ENCODE measurements at regions of chr10 and their contacts with region 1.

Region 1: GRCh38 chr10:79195091-79195923 is 126.5 kb downstream of the ZMIZ1 start:
- DNase-seq: peak; percentile 86
- H3K4me3 ChIP-seq: no peak overlapping the region
- H3K27ac ChIP-seq: peak overlapping the region; percentile 74
- H3K4me1 ChIP-seq: peaks cover 69% of the 10 kb centered on the region
- H3K27me3 ChIP-seq: no peaks in the 10 kb centered on the region
- CTCF ChIP-seq: peak; percentile 97

Region 2: DNA sequence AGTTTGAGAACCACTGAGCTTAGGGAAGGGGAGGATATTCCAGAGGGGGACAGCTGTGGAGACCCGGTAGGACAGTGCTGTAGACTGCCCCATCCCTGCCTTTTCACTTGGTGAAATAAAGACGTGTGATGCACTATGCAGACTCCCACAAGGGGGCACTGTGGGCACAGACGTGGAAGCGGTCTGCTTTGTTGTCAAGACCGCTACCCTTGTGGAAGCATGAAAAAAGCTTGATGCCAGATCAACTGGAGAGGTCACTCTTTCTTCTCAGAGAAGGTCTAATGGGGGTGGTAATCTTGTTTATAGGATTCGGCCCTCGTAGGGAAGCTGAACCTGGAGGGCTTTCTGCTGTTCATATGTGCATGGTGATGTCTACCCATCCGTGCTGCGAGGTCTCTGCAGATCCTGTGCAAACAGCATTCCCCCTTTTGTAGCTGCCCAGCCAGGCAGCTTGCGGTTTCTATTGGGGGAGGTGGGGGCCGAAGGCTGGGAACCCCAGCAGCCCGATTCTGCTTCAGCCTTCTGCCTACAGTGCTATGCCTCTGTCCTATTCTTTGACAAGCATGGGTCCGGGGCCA is 1147.9 kb before region 1 on chr10:
- intact Hi-C with region 1: loop called (anchors 10 kb)
- DNase-seq: peak; percentile 86
- H3K4me3 ChIP-seq: no peak overlapping the region
- H3K27ac ChIP-seq: no peak overlapping the region
- H3K4me1 ChIP-seq: peaks cover 21% of the 10 kb centered on the region
- H3K27me3 ChIP-seq: no peaks in the 10 kb centered on the region
- CTCF ChIP-seq: peak; percentile 90

Region 3: GRCh38 chr10:78852466-78853240 is 342.7 kb before region 1 on chr10:
- intact Hi-C with region 1: loop called (anchors 10 kb)
- DNase-seq: no peak
- H3K4me3 ChIP-seq: no peak overlapping the region
- H3K27ac ChIP-seq: no peak overlapping the region
- H3K4me1 ChIP-seq: peaks cover 16% of the 10 kb centered on the region
- H3K27me3 ChIP-seq: no peaks in the 10 kb centered on the region
- CTCF ChIP-seq: peak; percentile 49

Region 4: GRCh38 chr10:78865538-78865875 is 329.8 kb before region 1 on chr10:
- intact Hi-C with region 1: no loop called
- DNase-seq: no peak
- H3K4me3 ChIP-seq: no peak overlapping the region
- H3K27ac ChIP-seq: no peak overlapping the region
- H3K4me1 ChIP-seq: no peaks in the 10 kb centered on the region
- H3K27me3 ChIP-seq: no peaks in the 10 kb centered on the region
- CTCF ChIP-seq: no peak

Region 5: GRCh38 chr10:79068562-79069324 is 126.6 kb before region 1 on chr10 and contains the start of gene ZMIZ1:
- intact Hi-C with region 1: loop called (anchors 5 kb)
- DNase-seq: peak; percentile 89
- H3K4me3 ChIP-seq: peak within 1 kb of the TSS; percentile 89
- H3K27ac ChIP-seq: peak within 1 kb of the TSS; percentile 99
- H3K4me1 ChIP-seq: peaks cover 65% of the 10 kb centered on the region
- H3K27me3 ChIP-seq: no peaks in the 10 kb centered on the region
- CTCF ChIP-seq: peak; percentile 40
- total RNA-seq, gene ZMIZ1: 55.9 TPM

Region 6: DNA sequence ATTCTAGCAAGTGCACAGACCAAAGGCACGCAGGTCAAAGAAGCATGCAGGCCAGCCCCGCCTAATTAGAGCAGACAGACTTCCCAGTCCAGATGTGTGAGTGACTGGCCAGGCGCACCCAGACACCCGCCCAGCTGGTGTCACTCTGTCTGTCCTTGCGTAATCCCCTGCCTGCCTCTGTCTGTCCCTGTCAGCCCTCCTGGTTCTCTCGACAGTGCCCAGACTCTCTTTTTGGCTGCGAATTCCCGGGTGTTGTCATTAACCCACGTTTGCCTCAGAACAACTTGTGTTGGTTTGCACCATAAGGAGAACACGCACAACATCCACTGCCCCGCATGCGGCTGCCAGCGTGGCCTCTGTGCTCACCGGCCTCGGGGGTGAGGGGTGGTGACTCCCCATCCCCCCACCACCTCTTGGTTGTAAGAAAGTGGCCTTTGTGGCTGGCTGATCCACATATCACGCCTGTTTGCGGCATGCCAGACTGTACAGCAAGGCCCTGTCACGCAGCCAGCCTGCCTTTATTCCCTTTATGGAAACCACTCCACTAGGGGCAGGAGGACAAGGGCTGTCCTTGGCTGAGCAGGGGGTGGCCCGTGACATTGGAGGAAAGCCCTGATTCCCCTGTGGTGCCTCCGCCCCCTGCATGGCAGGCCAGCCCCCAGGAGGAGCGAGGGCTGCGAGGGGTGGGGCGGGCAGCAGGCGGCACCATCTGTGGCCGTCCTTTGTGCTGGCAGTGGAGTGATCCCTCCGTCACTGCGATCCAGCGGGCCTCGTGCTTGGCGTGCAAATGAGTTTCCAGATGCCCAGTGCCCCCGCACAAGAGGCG is 79.2 kb after region 1 on chr10:
- intact Hi-C with region 1: no loop called
- DNase-seq: peak; percentile 89
- H3K4me3 ChIP-seq: peak overlapping the region; percentile 35
- H3K27ac ChIP-seq: peak overlapping the region; percentile 93
- H3K4me1 ChIP-seq: peaks cover 88% of the 10 kb centered on the region
- H3K27me3 ChIP-seq: no peaks in the 10 kb centered on the region
- CTCF ChIP-seq: peak; percentile 45